ENCODE measurements at regions of chr17 and their contacts with region 1.

Region 1: GRCh38 chr17:46995841-46996571 is 17.0 kb upstream of the RPRML start:
- DNase-seq: no peak
- H3K4me3 ChIP-seq: no peak overlapping the region
- H3K27ac ChIP-seq: no peak overlapping the region
- H3K4me1 ChIP-seq: peaks cover 0 to 3% (median under 1%) of the 10 kb centered on the region in 4 donors
- H3K27me3 ChIP-seq: no peaks in the 10 kb centered on the region
- CTCF ChIP-seq: no peak
- EP300 ChIP-seq: no peak
- POLR2A ChIP-seq: no peak

Region 2: DNA sequence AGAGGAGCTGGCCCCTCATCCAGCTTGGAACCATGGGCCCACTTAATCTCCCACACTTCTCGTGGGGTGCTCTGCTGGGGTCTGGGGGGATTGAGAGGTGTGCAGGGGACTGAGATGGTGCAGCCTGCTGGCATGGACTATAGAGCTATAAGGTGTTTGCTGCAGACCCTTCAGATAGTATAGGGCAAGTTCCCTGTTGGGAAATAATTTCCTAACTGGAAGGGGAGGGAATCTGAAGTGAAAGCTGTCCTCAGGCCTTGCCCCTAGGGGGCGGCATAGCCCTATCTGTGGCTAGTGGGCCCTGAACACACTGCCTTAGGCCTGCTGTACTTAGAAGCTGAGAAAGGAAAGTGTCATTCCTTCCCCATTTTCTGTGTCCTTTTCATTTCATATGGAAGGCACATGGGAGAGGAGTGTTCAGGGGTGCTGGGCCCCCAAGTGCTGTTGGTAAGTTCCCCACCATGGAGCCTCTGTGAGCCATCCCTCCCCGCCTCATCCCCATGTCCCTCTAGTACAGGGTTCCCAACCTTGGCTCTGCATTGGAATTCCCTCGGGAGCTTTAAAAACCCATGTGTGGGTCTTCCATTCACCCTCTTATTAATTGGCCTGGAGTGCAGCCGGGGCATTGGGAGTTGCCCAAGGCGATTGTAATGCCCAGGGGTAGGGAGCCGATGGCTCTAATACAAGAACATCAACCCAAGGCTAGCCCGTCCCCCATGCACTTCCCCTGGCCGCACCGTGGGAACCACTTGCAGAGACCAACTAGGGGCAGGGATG is 53.4 kb before region 1 on chr17:
- intact Hi-C with region 1: loop called (anchors 1 kb)
- DNase-seq: no peak
- H3K4me3 ChIP-seq: no peak overlapping the region
- H3K27ac ChIP-seq: no peak overlapping the region
- H3K4me1 ChIP-seq: peaks cover 0 to 24% (median 18%) of the 10 kb centered on the region in 4 donors
- H3K27me3 ChIP-seq: no peaks in the 10 kb centered on the region
- CTCF ChIP-seq: peak; percentile 20 to 70 (median 54)
- EP300 ChIP-seq: no peak
- POLR2A ChIP-seq: no peak

Region 3: DNA sequence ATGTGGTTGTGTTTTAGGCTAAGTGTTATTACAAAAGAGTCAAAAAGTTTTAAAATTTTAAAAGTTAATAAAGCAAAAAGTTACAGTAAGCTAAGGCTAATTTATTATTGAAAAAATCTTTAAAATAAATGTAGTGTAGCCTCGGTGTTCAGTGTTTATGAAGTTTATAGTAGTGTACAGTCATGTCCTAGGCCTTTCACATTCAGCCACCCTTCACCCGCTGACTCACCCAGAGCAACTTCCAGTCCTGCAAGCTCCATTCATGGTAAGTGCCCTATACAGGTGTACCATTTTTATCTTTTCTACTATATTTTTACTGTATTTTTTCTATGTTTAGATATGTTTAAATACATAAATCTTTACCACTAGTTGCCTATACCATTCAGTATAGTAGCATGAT is 81.6 kb after region 1 on chr17:
- intact Hi-C with region 1: no loop called
- DNase-seq: no peak
- H3K4me3 ChIP-seq: no peak overlapping the region
- H3K27ac ChIP-seq: no peak overlapping the region
- H3K4me1 ChIP-seq: no peaks in the 10 kb centered on the region
- H3K27me3 ChIP-seq: no peaks in the 10 kb centered on the region
- CTCF ChIP-seq: no peak
- EP300 ChIP-seq: no peak
- POLR2A ChIP-seq: no peak

Region 4: GRCh38 chr17:47698749-47699535 is 702.9 kb after region 1 on chr17:
- intact Hi-C with region 1: no loop called
- DNase-seq: peak; percentile 74
- H3K4me3 ChIP-seq: no peak overlapping the region
- H3K27ac ChIP-seq: no peak overlapping the region
- H3K4me1 ChIP-seq: peaks cover 0 to 16% (median 11%) of the 10 kb centered on the region in 4 donors
- H3K27me3 ChIP-seq: no peaks in the 10 kb centered on the region
- CTCF ChIP-seq: peak; percentile 68 to 96 (median 80)
- EP300 ChIP-seq: no peak
- POLR2A ChIP-seq: no peak